ENCODE measurements at regions of chr18 and their contacts with region 1.

Region 1: DNA sequence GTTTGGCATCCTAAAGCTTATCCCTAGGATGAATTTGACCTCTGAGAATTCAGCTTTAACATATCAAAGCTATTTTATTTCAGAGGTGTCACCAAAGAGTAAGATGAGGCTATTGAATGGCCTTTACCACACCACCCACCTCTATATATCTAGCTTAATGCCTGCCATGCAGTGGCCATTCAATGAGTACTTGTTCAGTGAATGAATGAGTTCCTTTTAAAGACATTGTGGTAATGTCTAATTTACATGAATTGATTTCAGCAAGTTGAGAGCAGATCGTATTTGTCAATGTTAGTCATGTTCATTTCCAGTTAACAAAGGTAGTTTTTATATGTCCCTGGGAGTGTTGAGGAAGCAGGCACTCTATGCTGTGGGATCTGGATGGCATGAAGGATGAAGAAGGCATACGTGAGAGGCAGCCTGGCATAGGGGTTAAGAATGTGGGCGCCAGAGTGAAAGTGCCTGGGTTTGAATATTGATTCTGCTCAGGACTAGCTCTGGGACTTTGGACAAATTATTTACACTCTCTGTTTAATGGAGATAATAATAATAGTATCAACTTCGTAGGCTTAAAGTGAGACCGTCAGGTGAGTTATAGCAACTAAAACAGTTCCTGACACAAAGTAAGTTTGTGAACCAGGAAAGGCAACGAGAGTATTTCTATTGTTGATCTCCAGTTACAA is 434.1 kb upstream of the CHST9 start:
- H3K4me3 ChIP-seq: no peak overlapping the region
- H3K27ac ChIP-seq: no peak overlapping the region
- H3K4me1 ChIP-seq: no peaks in the 10 kb centered on the region
- CTCF ChIP-seq: no peak

Region 2: GRCh38 chr18:27605107-27605834 is 14.0 kb before region 1 on chr18:
- CTCF ChIA-PET with region 1: interaction called, 11 read pairs
- POLR2A ChIA-PET with region 1: no interaction called
- H3K4me3 ChIP-seq: no peak overlapping the region
- H3K27ac ChIP-seq: no peak overlapping the region
- H3K4me1 ChIP-seq: no peaks in the 10 kb centered on the region
- CTCF ChIP-seq: peak; percentile 58; the same call in 1 of the 2 replicates

Measured in HEK293 (cell line).